ENCODE measurements at regions of chr18 and their contacts with region 1.

Region 1: GRCh38 chr18:35296060-35296459 is 6.0 kb upstream of the ZSCAN30 start:
- DNase-seq: no peak
- ATAC-seq: no peak
- H3K4me3 ChIP-seq: no peak overlapping the region
- H3K27ac ChIP-seq: no peak overlapping the region
- H3K4me1 ChIP-seq: peaks cover 0 to 5% (median 2%) of the 10 kb centered on the region in 3 donors
- H3K27me3 ChIP-seq: no peaks in the 10 kb centered on the region
- CTCF ChIP-seq: no peak

Region 2: DNA sequence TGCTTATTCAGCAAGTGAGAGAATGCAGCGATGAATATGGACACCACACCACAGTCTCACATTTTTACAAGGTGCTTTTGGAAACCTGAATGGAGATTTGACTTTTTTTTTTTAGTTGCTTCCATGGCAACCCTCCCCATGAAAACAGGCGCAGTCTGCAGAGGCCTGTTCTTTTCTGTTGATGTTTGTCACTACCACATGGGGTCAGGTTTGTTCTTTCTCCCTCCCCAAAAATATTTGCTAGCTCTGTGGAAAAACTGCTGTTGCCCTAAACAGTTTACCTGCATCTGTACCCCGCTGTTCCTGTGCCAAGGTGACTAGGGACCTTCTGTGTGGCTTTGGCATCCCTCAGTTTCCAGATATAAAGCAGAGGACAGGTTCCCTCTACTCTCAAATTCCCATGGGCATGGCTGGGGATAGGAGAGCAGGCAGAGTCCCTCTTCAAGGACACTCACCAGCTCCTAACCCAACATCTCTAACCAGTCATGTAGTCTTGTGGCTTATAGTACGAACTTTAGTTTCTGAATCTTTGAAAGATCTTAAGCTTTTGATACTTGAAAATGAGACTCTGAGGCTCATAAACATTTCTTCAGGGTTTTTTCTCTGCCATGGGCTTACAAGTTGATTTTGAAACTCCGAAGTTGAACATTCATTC is 269.5 kb before region 1 on chr18:
- intact Hi-C with region 1: no loop called
- DNase-seq: no peak
- ATAC-seq: no peak
- H3K4me3 ChIP-seq: no peak overlapping the region
- H3K27ac ChIP-seq: no peak overlapping the region
- H3K4me1 ChIP-seq: peaks cover 8 to 16% (median 11%) of the 10 kb centered on the region in 3 donors
- H3K27me3 ChIP-seq: no peaks in the 10 kb centered on the region
- CTCF ChIP-seq: no peak

Region 3: GRCh38 chr18:35334821-35335220 is 38.8 kb after region 1 on chr18:
- intact Hi-C with region 1: loop called in 1 of 3 experiments (anchors 5 kb)
- DNase-seq: no peak
- ATAC-seq: no peak
- H3K4me3 ChIP-seq: no peak overlapping the region
- H3K27ac ChIP-seq: no peak overlapping the region
- H3K4me1 ChIP-seq: peaks cover 3 to 10% (median 7%) of the 10 kb centered on the region in 3 donors
- H3K27me3 ChIP-seq: no peaks in the 10 kb centered on the region
- CTCF ChIP-seq: no peak

Region 4: DNA sequence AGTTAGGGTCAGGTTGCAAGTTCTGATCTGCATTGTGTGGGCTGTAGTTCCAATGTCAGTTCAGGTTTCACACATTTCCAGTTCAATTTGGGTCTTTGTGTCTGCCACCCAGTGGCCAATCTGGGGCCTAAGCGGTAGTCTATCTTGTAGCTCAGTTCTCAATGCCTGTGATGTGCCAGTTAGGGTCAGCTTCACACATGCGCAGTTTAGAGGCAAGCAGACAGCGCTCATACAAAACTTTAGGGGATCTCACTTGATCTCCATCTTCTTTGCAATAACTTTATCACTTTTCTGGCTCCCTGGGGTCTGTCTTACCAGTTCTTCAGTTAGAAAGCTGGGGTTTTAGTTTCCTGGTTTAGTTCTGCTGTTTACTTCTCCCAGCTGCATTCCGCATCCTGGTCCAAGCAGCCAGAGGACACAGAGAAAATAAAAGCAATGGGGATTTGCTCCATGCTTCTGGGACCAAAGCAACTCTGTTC is 59.1 kb after region 1 on chr18:
- intact Hi-C with region 1: no loop called
- DNase-seq: peak; percentile 58 to 79 (median 64)
- ATAC-seq: peak; percentile 97 to 100 (median 100)
- H3K4me3 ChIP-seq: no peak overlapping the region
- H3K27ac ChIP-seq: no peak overlapping the region
- H3K4me1 ChIP-seq: no peaks in the 10 kb centered on the region
- H3K27me3 ChIP-seq: no peaks in the 10 kb centered on the region
- CTCF ChIP-seq: peak; percentile 47 to 58 (median 55)

Region 5: DNA sequence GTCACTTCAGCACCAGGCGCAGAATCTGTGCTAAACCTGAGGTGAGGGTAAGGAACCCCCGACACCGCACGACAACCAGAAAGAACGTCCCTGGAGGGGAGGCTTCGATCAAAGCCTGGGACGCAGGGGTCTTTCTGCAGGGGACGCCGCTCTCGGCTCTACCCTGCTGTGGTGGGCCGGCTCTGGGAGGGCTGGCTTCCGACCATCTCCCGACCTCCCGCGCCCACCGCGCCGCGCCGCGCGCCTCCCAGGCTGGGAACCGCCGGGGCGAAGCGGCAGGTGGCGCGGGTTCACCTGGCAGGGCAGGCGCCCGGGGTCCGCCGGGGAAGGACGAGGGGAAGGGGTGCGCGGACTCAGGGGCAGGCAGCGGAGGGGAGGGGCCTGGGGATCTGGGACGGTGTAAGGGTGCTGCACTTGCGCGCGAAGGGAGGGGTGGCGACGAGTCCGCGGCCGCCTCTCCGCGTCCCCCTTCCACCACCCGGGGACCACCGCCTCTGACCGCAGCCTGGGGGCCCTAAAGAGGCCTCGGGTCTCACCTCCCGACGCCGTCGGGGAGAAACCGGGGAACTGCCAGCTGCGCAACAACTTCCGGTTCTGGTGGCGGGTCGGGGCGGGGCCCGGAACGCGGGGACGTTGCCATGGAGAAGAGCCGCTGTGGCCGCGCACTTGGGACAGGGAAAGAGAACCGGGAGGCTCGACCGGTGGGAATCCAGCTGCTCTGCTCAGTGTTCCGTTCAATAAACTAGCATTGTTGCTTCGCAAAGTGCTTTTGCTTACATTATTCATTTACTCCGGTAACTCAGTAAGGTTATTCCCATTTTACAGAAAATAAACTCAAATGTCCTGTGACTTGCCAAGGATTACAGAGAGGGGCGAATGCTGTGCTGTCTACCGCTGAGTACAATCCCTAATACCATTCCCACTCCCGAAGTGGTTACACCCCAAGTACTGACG is 81.0 kb after region 1 on chr18 and contains the start of gene ZNF396:
- intact Hi-C with region 1: no loop called
- DNase-seq: peak; percentile 83 to 95 (median 85)
- ATAC-seq: peak; percentile 96 to 98 (median 96)
- H3K4me3 ChIP-seq: peak within 1 kb of the TSS; percentile 71 to 95 (median 86)
- H3K27ac ChIP-seq: peak within 1 kb of the TSS in 3 of 4 donors; percentile 28 to 68 (median 36)
- H3K4me1 ChIP-seq: no peaks in the 10 kb centered on the region
- H3K27me3 ChIP-seq: no peaks in the 10 kb centered on the region
- CTCF ChIP-seq: no peak
- total RNA-seq, gene ZNF396: 2.1 to 3.8 (median 2.4) TPM